ENCODE measurements at regions of chr1 and their contacts with region 1.

Region 1: GRCh38 chr1:151189638-151190445 is at the start of gene VPS72:
- DNase-seq: peak; percentile 92
- H3K4me3 Mint-ChIP-seq: peak within 1 kb of the TSS; percentile 96
- H3K27ac Mint-ChIP-seq: peak within 1 kb of the TSS; percentile 95
- H3K4me1 Mint-ChIP-seq: peaks cover 32% of the 10 kb centered on the region
- H3K27me3 Mint-ChIP-seq: no peaks in the 10 kb centered on the region
- total RNA-seq, gene VPS72: 49.8 to 56.9 TPM

Region 2: DNA sequence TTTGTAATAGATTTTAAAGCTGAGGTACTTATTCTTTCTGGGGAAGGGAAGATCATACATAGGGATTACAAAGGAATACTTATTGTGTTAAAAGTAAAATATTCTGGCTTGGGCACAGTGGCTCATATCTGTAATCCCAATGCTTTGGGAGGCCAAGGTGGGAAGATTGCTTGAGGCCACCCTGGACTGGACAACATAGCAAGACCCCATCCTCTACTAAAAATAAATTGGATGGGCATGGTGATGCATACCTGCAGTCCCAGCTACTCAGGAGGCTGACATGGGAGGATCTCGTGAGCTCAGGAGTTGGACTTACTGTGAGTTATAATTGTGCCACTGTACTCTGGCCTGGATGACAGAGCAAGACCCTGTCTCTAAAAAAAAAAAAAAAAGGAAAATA is 91.7 kb before region 1 on chr1:
- CTCF ChIA-PET with region 1: interaction called, 4 read pairs
- intact Hi-C with region 1: loop called (anchors 1 kb)
- DNase-seq: no peak
- H3K4me3 Mint-ChIP-seq: no peak overlapping the region
- H3K27ac Mint-ChIP-seq: no peak overlapping the region
- H3K4me1 Mint-ChIP-seq: no peaks in the 10 kb centered on the region
- H3K27me3 Mint-ChIP-seq: no peaks in the 10 kb centered on the region

Region 3: DNA sequence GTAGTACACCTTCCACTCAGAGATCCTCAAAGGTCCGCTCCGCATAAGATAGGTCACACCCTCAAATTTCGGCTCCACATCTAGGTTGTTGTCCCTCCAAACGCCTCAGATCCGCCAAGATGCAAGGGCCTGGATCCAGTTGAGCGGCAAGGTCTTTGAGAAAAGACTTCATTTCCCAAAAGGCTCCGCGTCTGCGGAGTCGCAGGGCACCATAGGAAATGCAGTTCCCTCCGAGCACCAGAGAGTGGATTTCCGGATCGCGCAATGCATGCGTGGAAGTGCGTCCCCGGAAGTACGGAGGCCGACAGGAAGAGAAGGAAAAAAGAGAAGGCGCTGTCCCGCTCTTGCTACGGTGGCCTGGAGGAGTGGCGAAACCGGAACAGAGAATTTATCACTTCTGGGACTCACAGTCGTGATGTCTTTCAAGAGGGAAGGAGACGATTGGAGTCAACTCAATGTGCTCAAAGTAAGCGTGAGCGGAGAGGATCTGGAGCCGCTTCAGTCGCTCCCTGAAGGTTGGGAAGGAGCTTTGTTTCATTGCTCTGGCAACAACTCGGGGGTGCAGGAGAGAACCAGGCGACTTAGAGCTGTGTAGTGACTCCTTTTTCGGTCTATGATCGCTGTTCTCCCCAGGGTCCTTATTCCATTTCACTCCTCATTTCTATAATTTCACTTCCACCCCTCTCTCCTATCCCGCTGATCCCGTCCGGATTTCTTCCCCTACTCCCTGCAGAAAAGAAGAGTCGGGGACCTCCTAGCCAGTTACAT is 23.9 kb before region 1 on chr1 and contains the starts of genes LYSMD1 and SCNM1:
- CTCF ChIA-PET with region 1: interaction called, 4 read pairs
- intact Hi-C with region 1: loop called (anchors 1 kb)
- DNase-seq: peak; percentile 99
- H3K4me3 Mint-ChIP-seq: peak within 1 kb of the TSS; percentile 92
- H3K27ac Mint-ChIP-seq: peak within 1 kb of the TSS; percentile 90
- H3K4me1 Mint-ChIP-seq: peaks cover 51% of the 10 kb centered on the region
- H3K27me3 Mint-ChIP-seq: no peaks in the 10 kb centered on the region
- total RNA-seq, gene LYSMD1: 4.5 to 4.8 TPM
- total RNA-seq, gene SCNM1: 60.5 to 64.2 TPM

Region 4: DNA sequence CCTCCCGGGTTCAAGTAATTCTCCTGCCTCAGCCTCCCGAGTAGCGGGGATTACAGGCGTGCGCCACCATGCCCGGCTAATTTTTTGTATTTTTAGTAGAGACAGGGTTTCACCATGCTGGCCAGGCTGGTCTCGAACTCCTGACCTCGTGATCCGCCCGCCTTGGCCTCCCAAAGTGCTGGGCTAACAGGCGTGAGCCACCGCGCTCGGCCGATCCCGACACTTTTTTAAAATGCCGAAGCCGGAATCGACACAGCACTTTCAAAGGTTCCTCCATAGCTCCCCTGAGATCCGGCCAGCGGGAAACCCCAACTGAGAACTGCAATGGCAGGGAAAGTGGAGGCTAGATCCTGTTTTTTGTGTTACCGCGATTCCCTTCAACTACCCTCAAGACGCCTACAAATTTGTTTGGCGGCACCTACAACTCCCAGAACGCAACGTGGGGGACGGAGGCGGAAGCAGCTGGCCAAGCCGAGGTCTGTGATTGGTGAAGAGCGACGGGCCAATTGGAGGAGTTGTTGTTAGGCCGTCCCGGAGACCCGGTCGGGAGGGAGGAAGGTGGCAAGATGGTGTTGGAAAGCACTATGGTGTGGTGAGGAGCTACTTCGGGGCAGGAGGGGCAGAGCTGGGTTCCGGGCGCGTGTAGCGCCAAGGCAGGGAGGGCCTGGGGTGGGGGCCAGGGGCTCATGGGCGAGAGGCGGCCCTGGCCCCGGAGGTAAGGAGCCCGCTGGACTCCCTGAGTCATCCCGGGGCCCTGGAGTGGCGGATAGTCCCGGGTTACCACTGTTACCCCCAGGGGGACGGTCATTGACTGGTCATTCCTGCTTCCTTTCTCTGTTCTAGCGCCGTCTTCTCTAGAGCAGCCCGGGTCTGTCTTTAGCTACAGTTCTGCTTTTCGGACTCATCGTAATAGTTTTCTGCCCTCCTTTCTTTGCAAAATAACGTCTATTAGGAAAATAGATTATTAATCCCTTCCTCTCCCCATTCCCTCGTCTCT is 64.7 kb after region 1 on chr1 and contains the start of gene PSMD4:
- CTCF ChIA-PET with region 1: interaction called, 14 read pairs
- intact Hi-C with region 1: loop called (anchors 1 kb)
- DNase-seq: peak; percentile 97
- H3K4me3 Mint-ChIP-seq: peak within 1 kb of the TSS; percentile 95
- H3K27ac Mint-ChIP-seq: peak within 1 kb of the TSS; percentile 92
- H3K4me1 Mint-ChIP-seq: peaks cover 31% of the 10 kb centered on the region
- H3K27me3 Mint-ChIP-seq: peaks cover 2% of the 10 kb centered on the region
- total RNA-seq, gene PSMD4: 167 to 192 TPM